ENCODE measurements at regions of chr19 and their contacts with region 1.

Region 1: GRCh38 chr19:18469069-18469846 is 31.3 kb upstream of the ISYNA1 start:
- DNase-seq: peak in 6 of 10 donors; percentile 47 to 62 (median 50)
- H3K4me3 ChIP-seq: no peak overlapping the region
- H3K27ac ChIP-seq: peak overlapping the region in 3 of 59 donors; percentile 27 to 48 (median 28)
- H3K27me3 ChIP-seq: no peaks in the 10 kb centered on the region
- CTCF ChIP-seq: peak; percentile 31 to 84 (median 70)

Region 2: GRCh38 chr19:18364826-18365528 is 104.3 kb before region 1 on chr19:
- intact Hi-C with region 1: no loop called
- DNase-seq: no peak
- H3K4me3 ChIP-seq: no peak overlapping the region
- H3K27ac ChIP-seq: peak overlapping the region in 43 of 59 donors; percentile 0 to 83 (median 62)
- H3K27me3 ChIP-seq: no peaks in the 10 kb centered on the region
- CTCF ChIP-seq: no peak

Region 3: GRCh38 chr19:18496167-18496979 is 27.1 kb after region 1 on chr19:
- intact Hi-C with region 1: no loop called
- DNase-seq: no peak
- H3K4me3 ChIP-seq: no peak overlapping the region
- H3K27ac ChIP-seq: peak overlapping the region in 6 of 59 donors; percentile 5 to 68 (median 8)
- H3K27me3 ChIP-seq: no peaks in the 10 kb centered on the region
- CTCF ChIP-seq: no peak

Region 4: DNA sequence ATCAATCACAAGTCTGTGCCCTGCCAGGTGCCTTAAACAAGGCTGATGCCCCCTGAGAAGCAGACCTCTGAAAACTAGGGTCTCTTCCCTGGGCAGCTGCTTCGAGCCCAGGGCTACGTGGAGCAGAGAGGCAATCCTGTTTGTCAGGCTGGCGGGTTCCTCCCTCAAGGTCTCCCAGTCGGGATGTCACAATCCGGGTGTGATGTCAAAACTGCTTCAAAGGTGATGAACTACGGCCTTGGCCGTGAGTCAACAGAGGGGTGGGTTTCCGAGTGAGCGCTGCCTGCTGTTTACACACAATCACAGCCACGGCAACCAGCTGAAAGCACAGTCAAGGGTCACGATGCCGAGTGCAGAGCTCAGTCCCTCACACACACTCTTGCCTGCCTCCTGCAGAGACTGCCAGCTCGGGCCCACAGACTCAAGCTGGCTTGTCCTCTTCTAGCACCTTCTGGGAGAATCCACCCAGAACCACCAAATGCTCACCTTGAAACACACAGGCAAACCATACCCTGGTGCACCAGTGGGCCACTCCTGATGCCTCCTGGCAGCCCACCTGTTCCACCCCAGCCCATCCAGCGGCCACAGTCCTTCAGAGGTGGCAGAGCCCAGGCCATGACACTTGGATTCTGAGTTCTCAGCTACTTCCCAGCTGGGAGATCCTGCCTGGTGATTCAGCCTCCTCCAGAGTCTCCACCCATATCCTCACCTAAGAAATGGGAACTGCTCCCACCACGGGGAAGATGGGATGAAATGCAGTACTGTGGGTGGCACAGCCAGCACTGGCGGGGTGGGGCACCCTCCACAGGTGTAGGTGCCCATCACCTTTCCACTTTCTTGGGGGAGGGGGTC is 45.8 kb after region 1 on chr19:
- intact Hi-C with region 1: loop called (anchors 5 kb)
- DNase-seq: no peak
- H3K4me3 ChIP-seq: no peak overlapping the region
- H3K27ac ChIP-seq: peak overlapping the region in 39 of 59 donors; percentile 1 to 82 (median 51)
- H3K27me3 ChIP-seq: no peaks in the 10 kb centered on the region
- CTCF ChIP-seq: no peak

Region 5: DNA sequence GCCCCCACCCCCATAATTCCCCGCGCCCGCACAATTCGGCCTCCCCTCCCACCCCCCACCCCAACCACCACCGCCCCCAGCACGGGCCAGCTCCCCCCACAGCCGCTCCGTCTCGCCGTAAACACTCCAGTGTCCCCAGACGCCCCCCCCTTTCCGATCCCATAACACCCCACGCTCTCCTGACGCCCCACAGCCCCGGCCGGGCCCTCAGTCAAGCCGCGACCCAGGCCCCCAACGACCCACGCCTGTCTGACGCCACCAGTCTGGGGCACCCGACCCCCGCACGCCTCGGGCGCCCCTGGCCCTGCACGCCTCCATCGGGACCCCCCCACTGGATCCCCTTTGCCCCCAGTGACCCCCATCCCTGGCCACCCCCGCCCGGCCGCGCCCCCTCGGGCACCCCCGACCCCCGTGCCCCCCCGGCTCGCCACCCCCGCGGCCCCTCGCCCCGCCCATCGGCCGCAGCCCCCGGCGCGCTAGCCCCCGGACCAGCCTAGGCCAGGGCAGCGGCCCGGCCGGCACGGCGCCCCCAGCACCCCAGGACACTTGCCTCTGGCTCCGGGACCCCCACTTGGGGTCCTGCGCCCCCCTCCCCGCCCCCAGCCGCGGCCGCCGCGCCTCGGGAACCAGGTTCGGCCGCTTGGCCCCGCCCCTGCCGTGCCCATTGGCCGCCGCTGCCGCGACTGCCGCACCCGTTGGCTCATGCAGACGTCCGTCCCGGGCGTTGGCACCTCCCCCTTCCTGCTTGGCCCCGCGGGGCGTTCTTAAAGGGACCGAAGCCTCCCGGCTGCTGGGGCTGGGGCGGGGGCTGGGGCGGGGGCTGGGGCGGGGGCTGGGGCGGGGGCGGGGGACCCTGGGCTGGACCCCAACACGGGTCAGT is 73.9 kb after region 1 on chr19 and contains the start of gene FKBP8:
- intact Hi-C with region 1: loop called in 1 of 2 experiments (anchors 10 kb)
- DNase-seq: peak; percentile 92 to 98 (median 96)
- H3K4me3 ChIP-seq: peak within 1 kb of the TSS; percentile 41 to 77 (median 63)
- H3K27ac ChIP-seq: peak within 1 kb of the TSS in 57 of 59 donors; percentile 73 to 95 (median 88)
- H3K27me3 ChIP-seq: no peaks in the 10 kb centered on the region
- CTCF ChIP-seq: peak in 1 of 56 donors; percentile 14
- total RNA-seq, gene FKBP8: 391 to 680 (median 539) TPM

Region 6: DNA sequence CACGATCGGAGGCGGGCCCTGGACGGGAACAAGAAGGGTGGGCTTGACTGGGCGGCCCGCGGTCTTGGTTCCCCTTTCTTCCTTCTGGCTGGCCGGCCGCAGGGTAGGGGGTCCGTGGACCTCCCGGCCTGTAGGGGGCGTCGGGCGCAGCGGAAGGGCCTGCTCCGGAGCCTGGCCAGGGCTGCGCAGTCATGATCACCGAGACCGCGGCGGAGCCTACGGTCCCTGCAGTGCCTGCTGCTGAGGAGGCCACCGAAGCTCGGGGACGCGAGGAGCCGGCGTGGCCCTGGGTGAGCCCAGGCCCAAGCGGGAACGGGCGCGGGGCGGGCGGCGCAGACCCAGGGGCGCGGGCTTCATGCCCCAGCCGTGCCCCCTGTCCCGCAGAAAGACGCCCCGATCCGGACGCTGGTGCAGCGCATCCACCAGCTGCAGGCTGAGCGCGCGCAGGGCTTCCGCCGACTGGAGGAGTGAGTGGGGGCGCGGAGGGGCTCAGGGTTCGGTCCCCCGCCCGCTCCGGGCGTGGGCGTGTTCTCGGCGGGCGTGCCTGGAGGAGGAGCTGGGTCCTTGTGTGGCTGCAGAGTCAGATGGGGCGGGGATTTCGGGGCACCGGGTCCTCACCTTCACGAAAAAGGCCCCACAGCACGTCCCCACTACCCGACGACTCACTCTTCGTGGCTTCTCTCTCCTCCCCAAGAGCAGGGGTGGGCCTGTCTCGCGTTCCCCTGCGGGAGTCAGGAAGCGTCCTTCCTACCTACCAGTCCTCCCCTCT is 119.5 kb after region 1 on chr19 and contains the start of gene REX1BD:
- intact Hi-C with region 1: loop called in 1 of 2 experiments (anchors 5 kb)
- DNase-seq: peak; percentile 54 to 87 (median 74)
- H3K4me3 ChIP-seq: peak within 1 kb of the TSS; percentile 47 to 95 (median 86)
- H3K27ac ChIP-seq: peak within 1 kb of the TSS; percentile 60 to 99 (median 94)
- H3K27me3 ChIP-seq: no peaks in the 10 kb centered on the region
- CTCF ChIP-seq: peak; percentile 73 to 97 (median 92)
- total RNA-seq, gene REX1BD: 49.9 to 127 (median 88.9) TPM

Region 7: DNA sequence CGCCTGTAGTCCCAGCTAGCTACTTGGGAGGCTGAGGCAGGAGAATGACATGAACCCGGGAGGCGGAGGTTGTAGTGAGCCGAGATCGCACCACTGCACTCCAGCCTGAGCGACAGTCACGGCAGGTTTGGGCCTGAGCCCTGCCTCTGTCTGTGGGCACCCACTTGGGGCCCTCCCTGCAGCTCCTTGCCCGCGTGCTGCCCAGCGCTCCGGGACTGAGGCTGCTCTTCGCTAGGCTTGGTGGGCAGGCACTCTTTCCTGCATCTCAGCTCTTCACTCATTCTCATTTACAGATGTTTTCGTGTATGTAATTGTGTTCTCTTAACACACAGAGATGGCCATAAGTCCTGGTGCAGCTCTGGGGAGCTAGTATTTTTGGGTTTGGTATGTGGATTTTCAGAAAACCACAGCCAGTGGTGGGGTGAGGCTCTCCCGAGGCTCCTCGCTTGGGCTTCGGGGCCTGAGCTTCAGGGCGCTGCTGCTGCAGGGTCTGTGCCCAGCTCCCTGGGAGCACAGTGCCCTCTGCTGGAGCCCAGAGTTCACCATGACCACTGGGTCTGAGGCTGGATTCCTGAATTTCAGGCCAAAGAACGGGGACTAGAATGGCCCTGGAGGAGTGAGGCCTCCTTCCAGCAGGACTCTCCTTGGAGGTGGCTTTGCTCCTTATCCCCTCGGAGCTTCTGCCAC is 377.7 kb after region 1 on chr19:
- intact Hi-C with region 1: loop called (anchors 5 kb)
- DNase-seq: peak; percentile 71 to 91 (median 80)
- H3K4me3 ChIP-seq: peak overlapping the region in 8 of 59 donors; percentile 0 to 19 (median 7)
- H3K27ac ChIP-seq: peak overlapping the region in 53 of 59 donors; percentile 28 to 93 (median 79)
- H3K27me3 ChIP-seq: no peaks in the 10 kb centered on the region
- CTCF ChIP-seq: peak; percentile 54 to 93 (median 83)

Measured in dorsolateral prefrontal cortex (tissue), 120 donors.